Right ventricle myocardium superior (tissue), 1 donor: ENCODE measurements at regions of chr5 and their contacts with region 1.

Region 1: GRCh38 chr5:36875790-36876388 is 680 bp upstream of the NIPBL start:
- DNase-seq: peak; percentile 89
- ATAC-seq: peak; percentile 92

Region 2: GRCh38 chr5:36734422-36734821 is 141.5 kb before region 1 on chr5:
- intact Hi-C with region 1: loop called (anchors 5 kb)
- DNase-seq: no peak
- ATAC-seq: peak; percentile 52

Region 3: GRCh38 chr5:36944607-36945225 is 68.8 kb after region 1 on chr5:
- intact Hi-C with region 1: loop called (anchors 5 kb)
- DNase-seq: no peak
- ATAC-seq: no peak

Region 4: DNA sequence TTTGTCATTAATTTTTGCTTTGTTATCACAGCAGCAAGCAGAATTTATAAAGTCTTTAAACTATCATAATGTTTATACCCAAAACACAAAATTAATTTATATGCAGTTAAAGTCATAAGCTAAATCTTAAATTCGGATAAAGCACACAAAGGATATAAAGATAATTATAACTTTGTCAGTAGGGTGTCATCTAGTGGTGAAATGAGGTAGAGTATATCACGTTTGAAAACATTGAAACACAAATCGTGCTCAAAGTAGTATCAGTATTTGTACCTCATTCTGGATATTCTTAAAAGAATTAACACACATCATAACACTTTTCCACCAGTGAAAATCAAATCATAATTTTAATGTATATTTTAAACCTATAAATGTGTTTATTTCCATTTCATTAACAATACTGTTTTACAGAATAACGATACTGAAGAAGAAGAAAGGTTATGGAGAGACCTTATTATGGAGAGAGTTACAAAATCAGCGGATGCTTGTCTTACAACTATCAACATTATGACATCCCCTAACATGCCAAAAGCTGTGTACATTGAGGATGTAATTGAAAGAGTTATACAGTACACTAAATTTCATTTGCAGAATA is 130.2 kb after region 1 on chr5:
- intact Hi-C with region 1: no loop called
- DNase-seq: no peak
- ATAC-seq: peak; percentile 51